Cardiac septum (tissue), 1 donor: ENCODE measurements at regions of chr11 and their contacts with region 1.

Region 1: GRCh38 chr11:126194121-126194543 is 17.3 kb downstream of the RPUSD4 start:
- DNase-seq: no peak

Region 2: DNA sequence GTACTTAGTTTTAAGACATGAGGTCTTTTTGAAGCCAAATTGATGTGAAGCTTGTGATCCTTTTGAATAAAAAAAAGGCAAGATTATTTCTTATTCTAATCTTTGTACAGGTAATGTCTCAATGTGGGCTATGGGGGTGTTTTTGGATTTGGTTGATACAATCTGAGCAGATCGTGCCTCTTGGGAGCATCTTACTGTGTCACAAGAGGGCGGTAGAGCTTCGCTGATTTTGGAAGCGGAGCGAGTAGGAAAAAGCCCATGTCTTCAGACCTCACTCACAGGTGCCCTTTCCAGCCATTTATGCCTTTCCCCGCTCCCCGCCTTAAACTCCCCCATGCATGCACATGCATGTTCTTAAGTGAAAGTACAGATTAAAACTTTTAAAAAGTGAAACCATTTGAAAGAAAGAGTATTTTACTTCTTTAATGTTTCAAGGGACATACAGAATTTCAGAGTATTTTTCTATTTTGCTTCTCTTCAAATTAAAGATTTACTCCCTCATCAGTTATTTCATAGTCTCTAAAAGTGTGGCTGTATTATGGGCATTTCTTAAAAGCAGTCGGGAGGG is 271.0 kb before region 1 on chr11:
- intact Hi-C with region 1: loop called (anchors 1 kb)
- DNase-seq: no peak

Region 3: GRCh38 chr11:125941619-125942611 is 252.2 kb before region 1 on chr11:
- intact Hi-C with region 1: loop called (anchors 5 kb)
- DNase-seq: peak; percentile 71

Region 4: DNA sequence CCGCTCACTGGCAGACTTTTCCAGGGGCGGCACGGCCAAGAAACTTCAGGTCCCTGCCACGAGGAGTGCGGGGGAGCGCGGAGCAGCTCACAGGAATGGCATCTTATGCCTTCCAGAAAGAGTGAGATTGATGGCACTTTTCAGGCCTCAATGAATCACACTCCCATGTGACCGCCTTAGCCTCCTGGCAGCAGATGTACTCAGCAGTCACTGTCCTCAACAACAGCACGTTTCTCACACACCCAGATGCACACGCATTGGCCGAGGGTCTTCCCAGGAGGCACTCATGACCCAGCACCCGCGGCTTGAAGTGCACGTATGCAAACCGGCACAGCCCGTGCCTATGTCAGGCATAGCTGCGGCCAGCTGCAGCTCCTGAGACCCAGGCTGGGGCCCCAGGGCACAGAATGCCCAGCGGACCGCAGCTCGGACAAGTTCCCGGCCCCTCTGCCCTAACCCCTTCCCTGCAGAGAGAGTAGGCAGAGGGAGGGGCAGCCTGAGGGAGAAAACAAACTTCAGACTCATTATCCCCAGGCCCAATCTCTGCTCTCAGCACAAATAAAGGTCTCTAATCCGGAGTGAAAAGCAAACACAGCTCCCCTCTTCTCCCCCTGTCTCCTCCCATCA is 30.9 kb before region 1 on chr11:
- intact Hi-C with region 1: no loop called
- DNase-seq: no peak